ENCODE measurements at regions of chr16 and their contacts with region 1.

Region 1: GRCh38 chr16:67017810-67018488 is 11.0 kb upstream of the CBFB start:
- DNase-seq: peak; percentile 98
- ATAC-seq: peak; percentile 92
- H3K4me3 ChIP-seq: no peak overlapping the region
- H3K27ac ChIP-seq: peak overlapping the region; percentile 8; the same call in 1 of the 2 replicates
- H3K4me1 ChIP-seq: peaks cover 19 to 29% of the 10 kb centered on the region in 2 experiments
- H3K27me3 ChIP-seq: no peaks in the 10 kb centered on the region
- CTCF ChIP-seq: peak; percentile 90 to 96 (median 95)
- POLR2A ChIP-seq: no peak
- RAD21 ChIP-seq: peak; percentile 99

Region 2: DNA sequence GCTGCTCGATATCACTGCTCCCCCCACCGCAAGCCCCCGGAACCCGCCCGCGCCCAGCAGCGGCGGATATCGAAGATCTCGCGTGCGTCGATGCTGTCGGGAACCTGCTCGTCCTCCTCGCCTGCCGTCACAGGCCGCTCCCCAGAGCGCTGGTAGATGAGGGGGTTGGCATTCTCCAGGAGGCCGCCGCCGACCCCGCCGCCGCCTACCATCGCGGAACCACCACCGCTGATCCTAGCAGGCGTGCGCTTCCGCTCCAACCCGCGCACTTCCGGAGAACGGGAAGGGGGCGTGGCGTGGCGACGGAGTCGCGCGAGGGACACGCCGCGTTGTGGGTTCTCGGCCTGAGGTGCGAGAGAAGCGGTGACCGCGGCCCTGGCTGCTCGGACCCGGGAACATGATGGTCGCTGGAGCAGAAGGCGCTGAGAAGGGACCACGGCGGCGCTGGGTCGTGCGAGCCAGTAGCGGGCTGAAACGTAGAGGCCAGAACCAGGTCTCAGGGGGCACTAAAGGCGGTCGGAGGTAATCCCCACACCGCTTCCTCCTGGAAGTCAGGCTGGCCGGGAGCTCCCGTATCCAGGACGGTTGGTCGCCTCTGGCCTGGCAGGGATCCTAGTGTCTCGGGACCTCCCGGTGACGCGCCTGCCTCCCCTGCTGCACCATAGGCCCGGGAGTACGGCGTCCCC is 83.7 kb before region 1 on chr16 and contains the start of gene CIAO2B:
- CTCF ChIA-PET with region 1: no interaction called
- POLR2A ChIA-PET with region 1: no interaction called
- RAD21 ChIA-PET with region 1: no interaction called
- intact Hi-C with region 1: no loop called
- DNase-seq: peak; percentile 66
- ATAC-seq: peak; percentile 83
- H3K4me3 ChIP-seq: peak within 1 kb of the TSS; percentile 99
- H3K27ac ChIP-seq: peak within 1 kb of the TSS; percentile 95
- H3K4me1 ChIP-seq: peaks cover 0 to 29% of the 10 kb centered on the region in 2 experiments; a peak in 3 of 4 replicates
- H3K27me3 ChIP-seq: no peaks in the 10 kb centered on the region
- CTCF ChIP-seq: no peak
- POLR2A ChIP-seq: peak; percentile 86
- RAD21 ChIP-seq: no peak
- total RNA-seq, gene CIAO2B: 113 TPM

Region 3: DNA sequence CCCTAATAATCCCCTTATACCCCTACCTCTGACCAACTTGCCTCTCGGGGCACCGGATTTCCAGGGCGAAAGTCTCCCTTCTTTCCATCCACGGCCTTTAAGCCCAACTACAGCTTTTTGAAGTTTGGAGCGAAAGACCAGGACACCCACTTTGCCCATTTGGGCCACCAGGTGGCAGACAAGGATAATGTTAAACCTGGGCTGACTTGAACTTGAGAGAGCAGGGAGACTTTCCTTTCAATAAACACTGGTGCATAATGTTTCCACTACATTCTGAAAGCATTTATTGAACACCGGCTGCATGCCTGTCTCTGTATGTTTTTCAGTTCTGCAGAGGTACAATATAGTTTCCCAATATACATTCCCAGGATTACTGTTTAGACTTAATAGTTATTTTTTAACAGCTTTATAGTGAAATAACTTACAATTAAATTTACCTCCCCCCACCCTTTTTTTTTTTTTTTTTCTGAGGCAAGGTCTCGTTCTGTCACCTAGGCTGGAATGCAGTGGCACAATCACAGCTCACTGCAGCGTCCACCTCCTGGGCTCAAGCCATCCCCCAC is 63.8 kb before region 1 on chr16:
- CTCF ChIA-PET with region 1: interaction called, 13 read pairs
- POLR2A ChIA-PET with region 1: no interaction called
- RAD21 ChIA-PET with region 1: interaction called, 5 to 7 read pairs
- intact Hi-C with region 1: loop called (anchors 1 kb)
- DNase-seq: peak; percentile 74
- ATAC-seq: peak; percentile 95
- H3K4me3 ChIP-seq: no peak overlapping the region
- H3K27ac ChIP-seq: peak overlapping the region; percentile 3; the same call in 1 of the 2 replicates
- H3K4me1 ChIP-seq: peaks cover 11 to 12% of the 10 kb centered on the region in 2 experiments; a peak in 3 of 4 replicates
- H3K27me3 ChIP-seq: no peaks in the 10 kb centered on the region
- CTCF ChIP-seq: peak; percentile 82 to 93 (median 88)
- POLR2A ChIP-seq: no peak
- RAD21 ChIP-seq: peak; percentile 96

Region 4: DNA sequence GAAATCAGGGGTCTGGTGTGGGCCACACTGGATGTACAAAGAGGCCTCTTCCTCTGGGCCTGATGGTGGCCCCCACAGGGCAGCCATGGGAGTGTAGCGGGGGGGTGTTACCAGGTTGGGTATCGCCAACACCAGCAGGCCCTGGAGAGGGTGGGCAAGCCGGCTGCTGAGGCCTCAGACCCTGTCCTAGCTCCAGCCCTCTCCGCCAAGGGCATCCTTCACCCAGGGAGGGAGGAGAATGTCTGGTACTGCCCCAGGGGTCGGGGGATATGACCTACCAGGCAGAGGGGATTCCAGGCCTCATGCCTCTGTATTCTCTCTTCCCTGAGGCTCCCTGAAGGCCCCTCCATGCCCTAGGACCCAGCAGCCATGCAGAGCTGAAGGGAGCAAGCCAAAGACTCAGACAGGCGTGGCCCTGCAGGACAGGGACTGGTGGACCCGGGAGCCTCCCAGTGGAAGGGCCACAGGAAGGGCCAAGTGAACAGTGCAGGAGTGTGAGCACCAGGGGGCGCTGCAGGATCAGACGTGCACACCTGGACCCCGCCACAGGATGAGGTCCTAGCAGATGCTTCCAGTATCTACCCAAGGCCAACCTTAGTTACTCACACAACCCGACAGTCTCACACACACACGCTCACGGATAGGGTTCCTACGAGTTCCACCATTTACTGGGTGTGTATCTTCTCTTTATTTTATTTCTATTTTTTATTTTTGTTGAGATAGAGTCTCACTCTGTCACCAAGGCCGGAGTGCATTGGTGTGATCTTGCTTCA is 40.4 kb before region 1 on chr16:
- CTCF ChIA-PET with region 1: interaction called, 6 read pairs
- POLR2A ChIA-PET with region 1: no interaction called
- RAD21 ChIA-PET with region 1: no interaction called
- intact Hi-C with region 1: loop called (anchors 1 kb)
- DNase-seq: peak; percentile 60
- ATAC-seq: peak; percentile 97
- H3K4me3 ChIP-seq: no peak overlapping the region
- H3K27ac ChIP-seq: no peak overlapping the region
- H3K4me1 ChIP-seq: peaks cover 15 to 34% of the 10 kb centered on the region in 2 experiments
- H3K27me3 ChIP-seq: no peaks in the 10 kb centered on the region
- CTCF ChIP-seq: peak; percentile 92 to 97 (median 94)
- POLR2A ChIP-seq: no peak
- RAD21 ChIP-seq: peak; percentile 99

Region 5: DNA sequence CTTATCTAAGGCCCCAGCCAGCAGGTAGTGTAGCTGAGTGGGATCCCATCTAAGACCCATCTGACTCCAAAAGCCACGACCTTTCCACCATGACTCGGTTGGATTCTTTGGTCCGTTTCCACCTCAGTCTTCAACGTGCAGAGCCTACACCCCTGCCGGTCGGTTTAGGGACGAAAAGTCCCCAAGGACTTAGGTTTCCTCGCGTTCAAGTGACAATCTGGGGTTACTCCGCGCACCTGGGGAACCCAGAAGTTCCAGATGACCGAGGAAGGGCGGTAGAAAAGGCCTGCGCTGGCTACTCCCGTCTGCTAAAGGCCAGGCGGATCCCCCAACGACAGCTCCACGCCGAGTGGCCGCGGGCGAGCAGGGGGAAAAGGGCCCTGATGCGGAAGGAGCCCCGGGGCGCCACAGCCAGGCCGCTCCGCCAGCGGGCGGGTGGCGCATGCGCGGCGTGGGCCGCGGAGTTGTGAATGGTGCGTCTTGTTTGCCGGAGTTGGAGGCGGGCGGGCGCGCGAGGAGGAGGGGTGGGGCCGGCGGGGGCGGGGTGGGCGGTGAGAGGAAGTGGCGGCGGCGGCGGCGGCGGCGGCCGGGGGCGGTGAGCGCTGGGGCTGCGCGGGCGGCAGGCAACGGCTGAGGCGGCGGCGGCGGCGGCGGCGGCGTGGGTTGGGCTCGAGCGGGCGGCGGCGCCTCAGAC is 10.8 kb after region 1 on chr16 and contains the start of gene CBFB:
- CTCF ChIA-PET with region 1: interaction called, 19 read pairs
- POLR2A ChIA-PET with region 1: interaction called, 7 read pairs
- RAD21 ChIA-PET with region 1: no interaction called
- intact Hi-C with region 1: no loop called
- DNase-seq: peak; percentile 85
- ATAC-seq: peak; percentile 92
- H3K4me3 ChIP-seq: peak within 1 kb of the TSS; percentile 78 to 94
- H3K27ac ChIP-seq: peak within 1 kb of the TSS; percentile 97
- H3K4me1 ChIP-seq: peaks cover 12 to 24% of the 10 kb centered on the region in 2 experiments; a peak in 3 of 4 replicates
- H3K27me3 ChIP-seq: no peaks in the 10 kb centered on the region
- CTCF ChIP-seq: peak in 2 of 3 experiments; percentile 35 to 39; a peak in 3 of 6 replicates
- POLR2A ChIP-seq: peak; percentile 93
- RAD21 ChIP-seq: no peak
- total RNA-seq, gene CBFB: 101 TPM

Region 6: GRCh38 chr16:67159593-67160406 is 141.9 kb after region 1 on chr16 and contains the starts of genes FBXL8 and TRADD:
- CTCF ChIA-PET with region 1: interaction called, 79 read pairs
- POLR2A ChIA-PET with region 1: interaction called, 8 read pairs
- RAD21 ChIA-PET with region 1: interaction called, 13 to 19 read pairs
- intact Hi-C with region 1: loop called (anchors 1 kb)
- DNase-seq: no peak
- ATAC-seq: peak; percentile 74
- H3K4me3 ChIP-seq: peak within 1 kb of the TSS; percentile 80 to 98
- H3K27ac ChIP-seq: peak within 1 kb of the TSS; percentile 69
- H3K4me1 ChIP-seq: peaks cover 18 to 44% of the 10 kb centered on the region in 2 experiments
- H3K27me3 ChIP-seq: no peaks in the 10 kb centered on the region
- CTCF ChIP-seq: peak in 2 of 3 experiments; percentile 44 to 51; a peak in 5 of 6 replicates
- POLR2A ChIP-seq: no peak
- RAD21 ChIP-seq: no peak
- total RNA-seq, gene FBXL8: 27.8 TPM
- total RNA-seq, gene TRADD: 20.5 TPM

Region 7: DNA sequence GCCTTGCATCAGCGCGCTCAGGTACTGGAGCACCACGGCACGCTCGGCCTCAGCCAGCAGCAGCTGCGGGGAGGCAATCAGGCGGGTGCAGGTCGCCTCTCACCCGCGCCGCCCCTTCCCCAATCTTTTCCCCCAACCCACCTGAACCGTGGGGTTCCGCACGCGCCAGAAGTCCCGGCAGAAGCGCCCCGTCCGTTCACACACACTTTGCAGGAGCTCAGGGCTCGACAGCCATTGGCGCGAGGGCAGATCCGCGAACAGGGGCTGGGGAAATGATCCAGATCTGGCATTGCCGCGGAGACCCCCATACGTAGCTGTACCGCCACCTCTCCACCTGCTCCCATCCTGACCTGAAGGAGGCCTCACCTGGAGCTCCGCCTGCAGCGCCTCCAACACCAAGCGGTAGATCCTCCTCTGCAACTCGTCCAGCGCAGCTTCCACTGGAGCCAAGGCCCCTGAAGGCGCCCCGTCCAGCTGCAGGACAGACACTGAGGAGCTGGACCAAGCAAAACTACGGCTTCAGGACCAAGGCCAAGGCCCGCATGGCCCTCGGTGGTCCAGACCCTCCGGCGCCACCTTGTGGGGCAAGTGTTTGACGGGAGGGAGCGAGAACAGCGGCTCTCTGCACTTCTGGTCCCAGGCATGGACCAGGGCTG is 167.2 kb after region 1 on chr16:
- CTCF ChIA-PET with region 1: interaction called, 11 read pairs
- POLR2A ChIA-PET with region 1: no interaction called
- RAD21 ChIA-PET with region 1: interaction called in 1 of 2 experiments, 16 read pairs
- intact Hi-C with region 1: loop called (anchors 1 kb)
- DNase-seq: peak; percentile 67
- ATAC-seq: peak; percentile 61
- H3K4me3 ChIP-seq: no peak overlapping the region
- H3K27ac ChIP-seq: no peak overlapping the region; the same call in 1 of the 2 replicates
- H3K4me1 ChIP-seq: peaks cover 10 to 43% of the 10 kb centered on the region in 2 experiments; a peak in 3 of 4 replicates
- H3K27me3 ChIP-seq: no peaks in the 10 kb centered on the region
- CTCF ChIP-seq: peak in 2 of 3 experiments; percentile 80; a peak in 4 of 6 replicates
- POLR2A ChIP-seq: no peak
- RAD21 ChIP-seq: no peak